ENCODE measurements at regions of chr14 and their contacts with region 1.

Region 1: DNA sequence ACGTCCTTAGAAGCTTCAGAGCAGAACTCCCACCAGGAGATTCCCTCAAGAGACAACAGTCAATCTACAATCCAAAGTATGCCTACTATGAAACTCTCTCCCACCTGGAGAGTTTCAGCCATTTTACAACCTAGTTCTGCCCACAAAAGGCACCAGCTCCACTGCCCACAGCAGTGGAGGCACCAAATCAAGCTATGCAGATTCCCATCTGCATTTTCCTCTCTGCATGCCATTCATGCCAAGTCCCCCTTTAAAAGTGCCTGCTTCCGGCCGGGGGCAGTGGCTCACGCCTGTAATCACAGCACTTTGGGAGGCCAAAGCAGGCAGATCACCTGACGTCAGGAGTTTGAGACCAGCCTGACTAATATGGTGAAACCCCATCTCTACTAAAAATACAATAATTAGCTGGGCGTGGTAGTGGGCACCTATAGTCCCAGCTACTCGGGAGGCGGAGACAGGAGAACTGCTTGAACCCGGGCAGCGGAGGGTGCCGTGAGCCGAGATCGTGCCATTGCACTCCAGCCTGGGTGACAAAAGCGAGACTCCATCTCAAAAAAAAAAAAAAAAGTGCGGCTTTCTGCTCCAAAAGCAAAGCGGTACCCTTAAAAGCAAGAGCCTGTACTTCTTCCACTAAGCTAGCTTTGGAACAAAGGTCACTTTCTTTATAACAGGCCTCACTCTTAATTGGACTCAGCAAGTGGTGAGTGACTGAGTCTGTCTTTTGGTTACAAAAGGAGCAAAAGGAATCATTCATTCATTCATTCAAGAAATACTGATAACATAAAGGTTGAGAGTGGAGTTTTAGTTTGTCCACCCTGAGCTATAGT is 10.1 kb upstream of the DLGAP5 start:
- DNase-seq: no peak
- H3K4me3 ChIP-seq: no peak overlapping the region
- H3K27ac ChIP-seq: no peak overlapping the region
- H3K27me3 ChIP-seq: no peaks in the 10 kb centered on the region
- CTCF ChIP-seq: no peak

Region 2: DNA sequence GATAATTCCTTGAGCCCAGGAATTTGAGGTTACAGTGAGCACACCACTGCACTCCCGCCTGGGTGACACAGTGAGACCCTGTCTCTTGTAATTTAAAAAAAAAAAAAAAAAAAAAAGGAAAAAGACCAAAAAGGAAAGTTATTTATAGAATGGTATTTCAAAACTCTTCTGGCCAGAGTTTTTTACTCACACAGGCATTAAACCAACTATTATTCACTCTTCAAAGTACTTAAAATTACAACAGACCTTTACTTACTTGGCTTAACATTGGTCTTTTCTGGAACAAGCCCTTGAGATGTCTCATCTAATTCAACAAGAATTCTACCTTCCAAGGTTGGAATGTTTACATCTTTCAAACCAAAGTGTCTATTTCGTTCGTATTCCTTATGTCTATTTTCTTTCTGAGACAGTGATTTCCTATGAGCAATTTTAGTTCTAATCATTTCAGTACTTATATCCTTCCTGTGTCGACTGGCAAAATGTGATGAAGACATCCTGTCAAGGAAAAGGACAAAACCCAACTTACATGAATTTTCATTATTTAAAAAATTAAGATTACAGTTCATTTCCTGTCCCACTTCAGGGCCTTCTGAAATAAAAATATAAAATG is 12.6 kb before region 1 on chr14:
- CTCF ChIA-PET with region 1: interaction called, 15 read pairs
- POLR2A ChIA-PET with region 1: interaction called, 3 read pairs
- DNase-seq: no peak
- H3K4me3 ChIP-seq: no peak overlapping the region
- H3K27ac ChIP-seq: no peak overlapping the region
- H3K27me3 ChIP-seq: no peaks in the 10 kb centered on the region
- CTCF ChIP-seq: no peak

Measured in AG04450 (cell line).